ENCODE measurements at regions of chr11 and their contacts with region 1.

Region 1: DNA sequence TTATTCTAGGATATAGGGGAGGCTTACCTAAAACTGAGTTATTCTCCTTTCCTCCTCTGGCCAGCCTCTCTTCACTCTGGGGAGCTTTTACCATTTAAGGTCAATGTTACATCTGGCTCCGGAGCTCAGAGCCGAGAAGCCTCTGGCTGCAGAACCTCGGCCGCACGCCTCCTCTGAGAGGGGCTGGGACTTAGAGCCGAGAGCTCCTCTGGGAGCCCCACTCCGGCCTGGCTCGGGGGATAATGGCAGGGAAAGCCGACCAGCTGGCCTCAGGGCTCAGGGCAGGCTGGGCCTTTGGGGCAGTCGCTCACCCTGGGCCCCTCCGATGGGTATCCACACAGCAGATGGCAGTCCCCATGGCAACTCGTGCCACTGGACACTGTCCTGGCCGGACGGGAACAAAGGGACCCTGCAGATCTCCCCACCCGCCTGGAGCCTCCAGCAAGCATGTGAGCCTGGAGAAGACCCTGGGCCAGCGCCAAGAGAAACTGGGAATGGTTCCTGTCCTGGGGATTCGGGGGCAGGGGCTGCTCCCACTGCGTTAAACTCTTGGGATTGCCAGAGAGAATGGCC is at the start of gene IRAG1:
- DNase-seq: no peak
- H3K4me3 ChIP-seq: peak within 1 kb of the TSS in 1 of 3 donors; percentile 2
- H3K27ac ChIP-seq: peak within 1 kb of the TSS in 2 of 3 donors; percentile 19 to 56
- H3K4me1 ChIP-seq: no peaks in the 10 kb centered on the region
- H3K27me3 ChIP-seq: no peaks in the 10 kb centered on the region
- CTCF ChIP-seq: no peak
- POLR2A ChIP-seq: no peak
- total RNA-seq, gene IRAG1: 3.2 to 14.4 (median 5.8) TPM

Region 2: DNA sequence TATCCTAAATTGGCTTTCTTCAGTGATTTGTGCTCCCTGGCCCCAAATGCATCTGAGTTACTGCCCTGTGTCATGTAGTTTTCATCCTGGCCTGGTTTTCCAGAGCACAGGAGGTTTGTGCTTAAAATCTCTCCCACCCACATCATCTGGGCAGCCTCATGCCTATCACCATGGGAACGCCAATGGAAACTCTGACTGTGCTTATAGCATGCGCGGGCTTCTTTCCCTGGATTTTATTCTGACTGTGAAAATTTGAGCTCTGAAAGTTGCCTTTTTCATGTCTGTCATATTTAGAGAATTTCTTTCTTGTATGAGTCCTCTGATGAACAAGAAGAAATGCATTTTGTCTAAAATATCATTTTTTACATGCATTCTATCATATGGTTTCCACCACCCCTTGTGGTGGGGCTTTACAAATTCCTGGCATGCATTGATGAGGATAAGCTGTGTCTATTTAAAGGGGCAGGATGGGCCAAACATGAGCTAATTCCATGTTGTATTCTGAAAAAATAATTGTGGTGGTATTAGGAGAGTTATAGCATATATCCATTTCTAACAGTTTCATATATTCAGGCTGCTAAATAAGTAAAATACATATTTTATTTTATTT is 55.2 kb before region 1 on chr11:
- intact Hi-C with region 1: loop called (anchors 10 kb)
- DNase-seq: no peak
- H3K4me3 ChIP-seq: no peak overlapping the region
- H3K27ac ChIP-seq: no peak overlapping the region
- H3K4me1 ChIP-seq: no peaks in the 10 kb centered on the region
- H3K27me3 ChIP-seq: no peaks in the 10 kb centered on the region
- CTCF ChIP-seq: no peak
- POLR2A ChIP-seq: no peak

Measured in thyroid gland (tissue), 4 donors.